Testis (tissue), 5 donors: ENCODE measurements at regions of chr13 and their contacts with region 1.

Region 1: GRCh38 chr13:32019612-32020233 is 11.9 kb upstream of the FRY start:
- DNase-seq: peak; percentile 69
- H3K4me3 ChIP-seq: no peak overlapping the region
- H3K27ac ChIP-seq: no peak overlapping the region
- H3K4me1 ChIP-seq: no peaks in the 10 kb centered on the region
- H3K27me3 ChIP-seq: no peaks in the 10 kb centered on the region
- CTCF ChIP-seq: peak in 2 of 3 experiments; percentile 49 to 59
- POLR2A ChIP-seq: no peak

Region 2: DNA sequence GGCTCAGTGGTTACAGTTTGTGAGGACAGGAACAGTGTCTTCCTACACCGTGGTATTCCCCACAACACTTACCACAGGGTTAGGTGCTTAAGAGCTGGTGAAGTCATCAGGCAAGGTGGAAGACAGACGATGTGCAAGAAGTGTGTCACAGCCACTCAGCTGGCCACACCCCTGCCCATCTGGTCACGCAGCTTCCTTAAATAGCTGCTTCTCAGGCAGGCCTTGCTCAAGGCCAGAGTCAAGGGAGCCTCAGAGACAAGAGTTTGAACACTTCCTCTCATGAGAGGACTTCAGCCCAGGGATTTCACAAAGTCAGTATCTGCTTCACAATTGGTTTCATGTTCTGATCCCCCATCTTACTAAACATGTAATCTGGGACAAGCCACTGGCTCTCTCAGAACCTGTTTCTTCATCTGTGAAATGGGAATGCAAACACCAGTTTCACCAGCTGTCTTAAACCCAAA is 68.5 kb before region 1 on chr13:
- intact Hi-C with region 1: no loop called
- DNase-seq: peak; percentile 51
- H3K4me3 ChIP-seq: no peak overlapping the region
- H3K27ac ChIP-seq: no peak overlapping the region
- H3K4me1 ChIP-seq: no peaks in the 10 kb centered on the region
- H3K27me3 ChIP-seq: no peaks in the 10 kb centered on the region
- CTCF ChIP-seq: no peak
- POLR2A ChIP-seq: no peak

Region 3: GRCh38 chr13:32309312-32310133 is 289.8 kb after region 1 on chr13:
- intact Hi-C with region 1: loop called (anchors 10 kb)
- DNase-seq: no peak
- H3K4me3 ChIP-seq: no peak overlapping the region
- H3K27ac ChIP-seq: peak overlapping the region in 1 of 2 donors; percentile 37
- H3K4me1 ChIP-seq: peaks cover 7% of the 10 kb centered on the region
- H3K27me3 ChIP-seq: no peaks in the 10 kb centered on the region
- CTCF ChIP-seq: no peak
- POLR2A ChIP-seq: no peak

Region 4: DNA sequence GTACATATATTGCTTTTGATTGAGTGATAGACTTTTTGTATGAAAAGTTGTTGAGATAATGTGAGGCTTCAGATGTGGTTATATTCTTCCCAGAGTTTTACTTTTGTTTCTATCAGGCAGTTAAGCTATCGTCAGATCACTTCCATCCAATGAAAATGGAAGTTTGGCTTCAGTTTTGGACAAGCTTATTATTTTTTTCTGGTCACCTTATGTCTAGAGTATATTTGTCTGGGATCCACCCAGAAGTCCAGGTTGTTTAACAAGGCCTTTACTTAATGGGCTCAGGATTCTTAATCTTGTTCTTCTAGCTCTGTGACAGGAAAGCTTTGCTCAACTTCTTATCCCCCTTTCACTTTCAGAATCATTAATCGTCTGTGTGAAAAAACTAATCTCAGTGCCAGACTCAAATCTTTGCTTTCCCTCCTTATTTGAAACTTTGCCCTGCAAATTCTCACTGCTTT is 717.4 kb after region 1 on chr13:
- intact Hi-C with region 1: no loop called
- DNase-seq: no peak
- H3K4me3 ChIP-seq: peak overlapping the region in 1 of 2 donors; percentile 9
- H3K27ac ChIP-seq: peak overlapping the region in 1 of 2 donors; percentile 53
- H3K4me1 ChIP-seq: no peaks in the 10 kb centered on the region
- H3K27me3 ChIP-seq: no peaks in the 10 kb centered on the region
- CTCF ChIP-seq: no peak
- POLR2A ChIP-seq: no peak